RWPE1 (cell line): ENCODE measurements at regions of chr1 and their contacts with region 1.

Region 1: DNA sequence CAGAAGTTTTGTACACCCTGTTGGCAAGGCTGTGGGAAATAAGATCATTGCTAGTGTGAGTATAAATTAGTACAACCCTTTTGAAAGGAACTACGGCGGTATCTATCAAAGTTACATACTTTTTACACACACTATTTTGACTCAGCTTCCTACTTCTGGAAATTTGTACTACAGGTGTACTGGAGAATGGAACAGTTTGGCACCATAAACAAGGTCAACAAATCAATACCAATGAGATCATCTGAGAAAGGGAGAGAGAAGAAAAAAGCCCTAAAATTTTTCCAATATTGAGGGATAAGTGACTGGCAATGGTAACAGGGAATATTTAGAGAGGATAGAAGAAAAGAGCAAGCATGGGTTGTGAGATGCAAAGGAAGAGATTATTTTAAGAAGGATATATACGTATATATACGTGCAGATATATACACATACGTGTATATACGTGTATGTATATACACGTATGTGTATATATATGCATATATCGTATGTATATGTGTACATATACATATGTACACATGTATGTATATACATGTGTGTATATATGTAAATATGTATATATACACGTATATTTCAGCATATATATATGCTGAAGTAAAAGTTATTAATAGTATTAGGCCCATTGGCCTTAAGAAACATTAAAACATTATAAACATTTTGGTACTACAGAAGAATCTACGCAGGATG is 27.6 kb downstream of the KLHL20 start:
- DNase-seq: no peak
- H3K27ac ChIP-seq: no peak overlapping the region
- CTCF ChIP-seq: no peak

Region 2: DNA sequence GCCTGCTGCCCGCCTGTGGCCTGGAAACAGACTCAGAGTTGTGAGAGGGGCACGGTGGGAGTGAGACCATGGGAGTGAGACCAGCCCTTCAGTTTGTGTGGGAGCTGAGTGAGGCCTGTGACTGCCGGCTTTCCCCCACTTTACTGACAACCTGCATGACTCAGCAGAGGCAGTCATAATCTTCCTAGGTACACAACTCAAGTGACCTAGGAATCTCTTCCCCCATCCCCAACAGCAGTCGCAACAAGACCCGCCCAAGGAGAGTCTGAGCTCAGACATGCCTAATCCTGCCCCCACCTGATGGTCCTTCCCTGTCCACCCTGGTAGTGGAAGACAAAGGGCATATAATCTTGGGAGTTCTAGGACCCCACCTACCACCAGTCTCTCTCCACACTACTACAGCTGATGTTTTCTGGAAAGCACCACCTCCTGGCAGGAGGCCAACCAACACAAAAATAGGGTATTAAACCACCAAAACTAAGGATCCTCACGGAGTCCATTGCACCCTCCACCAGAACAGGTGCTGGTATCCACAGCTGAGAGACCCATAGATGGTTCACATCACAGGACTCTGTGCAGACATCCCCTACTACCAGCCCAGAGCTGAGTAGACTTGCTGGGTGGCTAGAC is 16.8 kb after region 1 on chr1:
- CTCF ChIA-PET with region 1: interaction called, 12 read pairs
- POLR2A ChIA-PET with region 1: no interaction called
- DNase-seq: peak; percentile 18
- H3K27ac ChIP-seq: peak overlapping the region; percentile 45
- CTCF ChIP-seq: no peak